HCT116 (cell line): ENCODE measurements at regions of chr3 and their contacts with region 1.

Region 1: GRCh38 chr3:5138214-5138981 is 16.3 kb downstream of the ARL8B start:
- DNase-seq: no peak
- ATAC-seq: no peak
- H3K4me3 ChIP-seq: no peak overlapping the region
- H3K27ac ChIP-seq: no peak overlapping the region
- H3K4me1 ChIP-seq: peaks cover 5 to 10% of the 10 kb centered on the region in 2 experiments
- H3K27me3 ChIP-seq: no peaks in the 10 kb centered on the region
- CTCF ChIP-seq: no peak
- POLR2A ChIP-seq: no peak
- RAD21 ChIP-seq: no peak

Region 2: DNA sequence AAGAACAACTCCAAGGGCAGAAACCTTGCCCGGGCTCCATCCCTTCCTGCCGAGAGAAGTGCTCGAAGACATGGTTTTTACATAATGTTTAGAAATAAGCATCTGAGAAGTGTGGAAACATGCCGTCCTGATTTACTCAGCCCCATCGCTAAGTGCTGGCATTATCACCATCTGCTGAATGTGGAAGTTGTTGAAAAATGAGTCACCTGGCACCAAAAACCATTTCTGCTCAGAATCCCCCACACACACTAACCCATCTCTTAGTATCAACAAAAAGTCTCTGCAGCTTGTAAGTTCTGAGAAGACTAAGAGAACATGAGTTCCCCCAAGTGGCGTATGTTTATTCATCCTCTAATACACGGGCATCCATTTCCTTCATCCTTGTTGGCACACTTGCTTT is 67.3 kb before region 1 on chr3:
- CTCF ChIA-PET with region 1: no interaction called
- POLR2A ChIA-PET with region 1: no interaction called
- RAD21 ChIA-PET with region 1: no interaction called
- intact Hi-C with region 1: loop called (anchors 2 kb)
- DNase-seq: no peak
- ATAC-seq: no peak
- H3K4me3 ChIP-seq: no peak overlapping the region
- H3K27ac ChIP-seq: no peak overlapping the region
- H3K4me1 ChIP-seq: no peaks in the 10 kb centered on the region
- H3K27me3 ChIP-seq: no peaks in the 10 kb centered on the region
- CTCF ChIP-seq: no peak
- POLR2A ChIP-seq: no peak
- RAD21 ChIP-seq: no peak

Region 3: DNA sequence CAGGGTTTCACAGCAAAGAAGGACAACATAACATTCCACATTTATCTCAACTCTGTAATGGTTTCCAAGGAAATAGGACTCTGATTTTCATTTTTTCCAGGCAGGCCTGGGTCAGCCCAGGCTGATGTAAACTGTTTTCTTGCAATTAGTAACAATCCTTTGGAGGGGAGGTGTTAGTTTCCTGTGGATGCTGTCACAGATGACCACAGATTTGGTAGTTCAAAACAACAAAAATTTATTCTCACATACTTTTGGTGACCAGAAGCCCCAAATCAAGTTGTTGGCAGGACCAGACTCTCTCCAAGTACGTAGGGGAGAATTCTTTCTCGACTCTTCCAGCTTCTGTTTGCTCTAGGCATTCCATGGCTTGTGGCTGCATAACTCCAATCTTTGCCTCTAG is 137.1 kb after region 1 on chr3:
- CTCF ChIA-PET with region 1: no interaction called
- POLR2A ChIA-PET with region 1: no interaction called
- RAD21 ChIA-PET with region 1: no interaction called
- intact Hi-C with region 1: no loop called
- DNase-seq: no peak
- ATAC-seq: no peak
- H3K4me3 ChIP-seq: no peak overlapping the region
- H3K27ac ChIP-seq: no peak overlapping the region
- H3K4me1 ChIP-seq: no peaks in the 10 kb centered on the region
- H3K27me3 ChIP-seq: no peaks in the 10 kb centered on the region
- CTCF ChIP-seq: no peak
- POLR2A ChIP-seq: no peak
- RAD21 ChIP-seq: no peak

Region 4: DNA sequence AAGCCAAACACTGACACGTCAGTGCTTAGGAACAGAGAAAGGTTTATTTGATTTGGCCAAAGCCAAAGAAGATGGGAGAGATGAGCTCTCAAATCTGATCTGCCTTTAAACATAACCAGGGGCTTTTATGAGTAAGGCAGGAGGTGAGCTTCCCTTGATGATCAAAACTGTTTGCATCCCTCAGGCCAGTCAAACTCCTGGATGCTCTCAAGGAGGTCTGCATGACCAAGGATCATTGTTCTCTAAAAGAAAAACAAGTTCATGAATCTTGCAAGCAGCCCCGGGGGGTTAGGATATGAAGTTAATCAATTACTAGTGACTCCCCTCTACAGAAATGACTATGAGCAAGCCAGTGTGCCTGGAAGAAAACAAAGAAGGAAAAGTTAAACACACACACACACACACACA is 184.3 kb after region 1 on chr3:
- CTCF ChIA-PET with region 1: no interaction called
- POLR2A ChIA-PET with region 1: no interaction called
- RAD21 ChIA-PET with region 1: no interaction called
- intact Hi-C with region 1: no loop called
- DNase-seq: no peak
- ATAC-seq: no peak
- H3K4me3 ChIP-seq: no peak overlapping the region
- H3K27ac ChIP-seq: no peak overlapping the region
- H3K4me1 ChIP-seq: no peaks in the 10 kb centered on the region
- H3K27me3 ChIP-seq: no peaks in the 10 kb centered on the region
- CTCF ChIP-seq: no peak
- POLR2A ChIP-seq: no peak
- RAD21 ChIP-seq: no peak